Natural killer cell (primary cell): ENCODE measurements at regions of chr1 and their contacts with region 1.

Region 1: GRCh38 chr1:162412002-162412401 is at the start of gene SH2D1B:
- DNase-seq: peak; percentile 16 to 63
- ATAC-seq: peak; percentile 69 to 76 (median 76)
- H3K4me3 ChIP-seq: peak within 1 kb of the TSS; percentile 60
- H3K4me3 Mint-ChIP-seq: peak within 1 kb of the TSS; percentile 98
- H3K27ac ChIP-seq: peak within 1 kb of the TSS; percentile 83
- H3K27ac Mint-ChIP-seq: peak within 1 kb of the TSS; percentile 87 to 92
- H3K4me1 ChIP-seq: peaks cover 29% of the 10 kb centered on the region
- H3K4me1 Mint-ChIP-seq: peaks cover 82 to 89% of the 10 kb centered on the region in 2 donors
- H3K27me3 ChIP-seq: no peaks in the 10 kb centered on the region
- H3K27me3 Mint-ChIP-seq: no peaks in the 10 kb centered on the region
- CTCF ChIP-seq: no peak
- total RNA-seq, gene SH2D1B: 133 to 250 (median 143) TPM

Region 2: DNA sequence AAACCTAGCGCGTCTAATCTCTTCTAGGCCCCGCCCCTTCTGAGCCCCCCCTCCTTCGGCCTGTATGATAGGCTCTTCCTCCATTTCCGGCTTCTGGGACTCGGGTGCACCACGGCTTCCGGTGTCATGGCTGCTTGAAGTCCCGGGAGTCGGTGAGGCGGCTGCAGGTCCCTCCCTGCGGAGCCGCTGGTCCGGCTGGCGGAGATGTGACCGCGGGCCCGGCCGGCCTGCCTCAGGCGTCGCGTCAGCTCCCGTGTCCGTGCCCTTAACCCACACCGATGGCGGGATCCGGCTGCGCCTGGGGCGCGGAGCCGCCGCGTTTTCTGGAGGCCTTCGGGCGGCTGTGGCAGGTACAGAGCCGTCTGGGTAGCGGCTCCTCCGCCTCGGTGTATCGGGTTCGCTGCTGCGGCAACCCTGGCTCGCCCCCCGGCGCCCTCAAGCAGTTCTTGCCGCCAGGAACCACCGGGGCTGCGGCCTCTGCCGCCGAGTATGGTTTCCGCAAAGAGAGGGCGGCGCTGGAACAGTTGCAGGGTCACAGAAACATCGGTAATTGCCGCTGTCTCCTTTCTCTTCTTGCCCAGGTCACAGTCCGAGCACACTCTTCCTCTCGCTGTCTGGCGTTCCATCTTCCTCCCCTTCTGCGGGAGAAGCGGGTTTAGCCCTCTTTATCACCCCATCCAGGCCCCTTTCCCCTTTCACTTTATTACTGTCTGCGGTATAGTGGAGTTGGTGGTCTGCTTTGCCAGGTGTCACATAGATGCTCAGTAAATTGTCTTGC is 85.9 kb after region 1 on chr1 and contains the start of gene UHMK1:
- intact Hi-C with region 1: loop called (anchors 2 kb)
- DNase-seq: peak; percentile 80 to 95
- ATAC-seq: peak; percentile 97 to 98 (median 97)
- H3K4me3 ChIP-seq: peak within 1 kb of the TSS; percentile 65
- H3K4me3 Mint-ChIP-seq: peak within 1 kb of the TSS; percentile 93
- H3K27ac ChIP-seq: peak within 1 kb of the TSS; percentile 91
- H3K27ac Mint-ChIP-seq: peak within 1 kb of the TSS; percentile 88 to 96
- H3K4me1 ChIP-seq: peaks cover 13% of the 10 kb centered on the region
- H3K4me1 Mint-ChIP-seq: peaks cover 33 to 38% of the 10 kb centered on the region in 2 donors
- H3K27me3 ChIP-seq: no peaks in the 10 kb centered on the region
- H3K27me3 Mint-ChIP-seq: peaks cover 4 to 6% of the 10 kb centered on the region in 2 donors
- CTCF ChIP-seq: no peak
- total RNA-seq, gene UHMK1: 87.7 to 100 (median 99.1) TPM

Region 3: GRCh38 chr1:162548170-162548569 is 136.2 kb after region 1 on chr1:
- intact Hi-C with region 1: loop called (anchors 5 kb)
- DNase-seq: peak; percentile 51 to 53
- ATAC-seq: peak; percentile 94 to 99 (median 95)
- H3K4me3 ChIP-seq: no peak overlapping the region
- H3K4me3 Mint-ChIP-seq: peak overlapping the region; percentile 83
- H3K27ac ChIP-seq: peak overlapping the region; percentile 92
- H3K27ac Mint-ChIP-seq: peak overlapping the region; percentile 95 to 96
- H3K4me1 ChIP-seq: peaks cover 21% of the 10 kb centered on the region
- H3K4me1 Mint-ChIP-seq: peaks cover 27 to 32% of the 10 kb centered on the region in 2 donors
- H3K27me3 ChIP-seq: no peaks in the 10 kb centered on the region
- H3K27me3 Mint-ChIP-seq: no peaks in the 10 kb centered on the region
- CTCF ChIP-seq: no peak

Region 4: DNA sequence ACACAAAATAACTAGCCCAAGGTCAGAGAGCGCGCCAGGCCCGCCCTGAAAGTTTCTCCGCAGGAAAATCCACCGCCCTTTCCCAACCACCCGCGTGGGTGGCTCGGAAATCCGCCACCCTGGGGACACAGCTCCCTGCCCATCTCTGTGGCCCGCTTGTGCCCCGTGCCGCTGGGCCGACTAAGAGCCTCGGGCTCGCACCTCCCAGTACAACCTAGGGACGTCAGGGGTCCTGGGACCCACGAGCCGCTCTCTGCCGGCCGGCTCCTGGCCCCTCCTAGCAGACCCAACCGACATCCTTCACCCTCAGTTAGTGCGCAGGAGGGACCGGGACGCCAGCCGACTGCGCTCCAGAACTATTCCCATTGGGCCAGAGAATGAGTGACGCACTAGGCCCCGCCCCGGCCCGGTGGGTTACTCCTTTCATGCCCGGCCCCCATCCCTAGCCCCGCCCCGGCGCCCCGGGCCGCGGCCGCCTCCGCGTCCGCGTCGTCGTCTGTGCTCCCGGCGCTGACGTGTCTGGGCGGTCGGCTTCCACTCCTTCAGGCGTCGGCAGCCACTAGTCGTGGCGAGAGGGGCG is 149.1 kb after region 1 on chr1:
- intact Hi-C with region 1: loop called (anchors 5 kb)
- DNase-seq: peak; percentile 97 to 99
- ATAC-seq: peak; percentile 90 to 97 (median 90)
- H3K4me3 ChIP-seq: peak overlapping the region; percentile 79
- H3K4me3 Mint-ChIP-seq: peak overlapping the region; percentile 94
- H3K27ac ChIP-seq: peak overlapping the region; percentile 96
- H3K27ac Mint-ChIP-seq: peak overlapping the region; percentile 97 to 98
- H3K4me1 ChIP-seq: peaks cover 14% of the 10 kb centered on the region
- H3K4me1 Mint-ChIP-seq: peaks cover 45 to 48% of the 10 kb centered on the region in 2 donors
- H3K27me3 ChIP-seq: no peaks in the 10 kb centered on the region
- H3K27me3 Mint-ChIP-seq: no peaks in the 10 kb centered on the region
- CTCF ChIP-seq: no peak